ENCODE measurements at regions of chr4 and their contacts with region 1.

Region 1: DNA sequence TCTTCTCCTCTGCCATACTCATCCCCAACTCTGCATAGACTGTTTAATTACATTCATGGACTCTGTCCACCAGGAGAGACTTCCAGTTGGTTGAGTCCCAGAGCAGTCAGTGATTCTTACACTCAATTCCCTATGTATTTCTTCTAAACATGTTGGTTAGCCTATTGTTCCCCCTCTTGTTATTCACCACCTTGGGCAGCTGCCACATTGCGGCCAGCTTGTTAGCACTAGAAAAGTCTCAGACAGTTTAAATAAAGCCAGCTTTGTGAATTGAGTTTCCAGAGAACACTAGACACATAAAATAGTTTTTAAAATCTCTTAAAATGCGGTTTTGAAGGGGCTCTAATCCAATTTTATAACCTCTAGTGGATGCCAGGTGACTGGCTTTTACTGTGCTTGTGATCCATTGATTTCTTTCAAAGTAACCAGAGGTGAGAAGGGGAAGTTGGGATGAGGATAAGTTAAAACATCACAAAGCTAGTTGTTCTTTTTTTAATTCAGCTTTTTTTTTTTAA is 827.7 kb downstream of the FSTL5 start:
- DNase-seq: no peak
- H3K4me3 ChIP-seq: no peak overlapping the region
- H3K27ac ChIP-seq: no peak overlapping the region
- H3K4me1 ChIP-seq: no peaks in the 10 kb centered on the region
- H3K27me3 ChIP-seq: no peaks in the 10 kb centered on the region
- CTCF ChIP-seq: no peak

Region 2: GRCh38 chr4:161291222-161291621 is 44.9 kb before region 1 on chr4:
- intact Hi-C with region 1: loop called (anchors 2 kb)
- DNase-seq: no peak
- H3K4me3 ChIP-seq: no peak overlapping the region
- H3K27ac ChIP-seq: no peak overlapping the region
- H3K4me1 ChIP-seq: no peaks in the 10 kb centered on the region
- H3K27me3 ChIP-seq: no peaks in the 10 kb centered on the region
- CTCF ChIP-seq: no peak

Region 3: DNA sequence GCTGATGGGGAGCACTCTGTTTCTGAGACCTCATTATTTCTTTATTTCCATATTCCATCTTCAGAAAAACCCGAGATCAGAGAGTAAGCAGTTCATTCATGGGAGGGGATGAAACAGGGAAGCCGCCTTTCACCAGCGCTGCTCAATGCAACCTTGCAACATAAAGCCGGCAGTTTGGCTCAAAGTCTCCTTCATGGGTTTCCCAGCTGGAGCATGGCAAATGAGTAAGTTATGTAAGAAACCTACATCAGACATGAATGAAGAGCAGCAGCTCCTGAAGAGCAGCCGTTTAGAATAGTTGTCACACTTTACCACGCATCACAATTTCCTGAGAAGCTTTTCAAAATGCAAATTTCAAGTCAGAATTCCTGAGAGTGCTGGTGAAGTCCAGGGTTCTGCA is 248.9 kb after region 1 on chr4:
- intact Hi-C with region 1: no loop called
- DNase-seq: no peak
- H3K4me3 ChIP-seq: no peak overlapping the region
- H3K27ac ChIP-seq: no peak overlapping the region
- H3K4me1 ChIP-seq: no peaks in the 10 kb centered on the region
- H3K27me3 ChIP-seq: no peaks in the 10 kb centered on the region
- CTCF ChIP-seq: no peak